B cell (primary cell): ENCODE measurements at regions of chr1 and their contacts with region 1.

Region 1: DNA sequence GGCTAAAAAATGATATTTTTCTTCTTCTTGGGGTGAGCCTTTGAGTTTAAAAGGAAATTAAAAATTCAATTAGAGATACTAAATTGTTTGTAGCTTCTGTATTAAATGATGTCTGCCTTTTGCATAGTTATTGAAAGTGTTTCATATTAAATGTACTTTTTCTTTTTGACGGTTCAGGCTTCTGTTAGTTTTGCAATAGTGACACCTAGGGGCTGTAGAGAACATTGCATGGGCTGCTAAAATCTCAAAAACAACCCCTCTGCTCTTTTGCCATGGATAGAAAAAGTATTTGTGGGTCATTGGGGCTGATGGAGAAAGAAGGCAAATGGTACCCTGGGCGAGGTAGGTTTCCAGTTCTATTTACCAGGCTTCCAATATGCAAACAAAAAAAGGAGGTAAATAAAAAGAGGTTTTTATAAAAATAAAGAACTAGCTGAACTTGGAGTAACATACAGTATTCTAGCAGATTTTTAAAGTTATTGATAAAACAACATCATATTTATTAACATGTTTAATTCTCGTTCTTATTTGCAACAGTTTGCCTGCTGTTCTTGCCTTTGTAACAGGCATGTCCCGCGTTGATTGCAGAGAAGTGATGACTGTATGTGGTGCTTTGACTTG is 115.4 kb upstream of the HOOK1 start:
- DNase-seq: peak; percentile 67
- ATAC-seq: peak; percentile 44
- H3K4me3 ChIP-seq: no peak overlapping the region
- H3K4me3 Mint-ChIP-seq: no peak overlapping the region
- H3K27ac ChIP-seq: no peak overlapping the region
- H3K27ac Mint-ChIP-seq: no peak overlapping the region
- H3K4me1 ChIP-seq: peaks cover 24 to 29% of the 10 kb centered on the region in 2 donors
- H3K4me1 Mint-ChIP-seq: peaks cover 26% of the 10 kb centered on the region
- H3K27me3 ChIP-seq: no peaks in the 10 kb centered on the region
- H3K27me3 Mint-ChIP-seq: no peaks in the 10 kb centered on the region
- CTCF ChIP-seq: peak; percentile 97

Region 2: GRCh38 chr1:58515794-58516401 is 1183.4 kb before region 1 on chr1:
- CTCF ChIA-PET with region 1: interaction called, 4 read pairs
- POLR2A ChIA-PET with region 1: no interaction called
- intact Hi-C with region 1: loop called (anchors 5 kb)
- DNase-seq: peak; percentile 76
- ATAC-seq: peak; percentile 51
- H3K4me3 ChIP-seq: no peak overlapping the region
- H3K4me3 Mint-ChIP-seq: no peak overlapping the region
- H3K27ac ChIP-seq: peak overlapping the region in 1 of 2 donors; percentile 9
- H3K27ac Mint-ChIP-seq: peak overlapping the region; percentile 46
- H3K4me1 ChIP-seq: no peaks in the 10 kb centered on the region
- H3K4me1 Mint-ChIP-seq: no peaks in the 10 kb centered on the region
- H3K27me3 ChIP-seq: no peaks in the 10 kb centered on the region
- H3K27me3 Mint-ChIP-seq: no peaks in the 10 kb centered on the region
- CTCF ChIP-seq: peak; percentile 90

Region 3: DNA sequence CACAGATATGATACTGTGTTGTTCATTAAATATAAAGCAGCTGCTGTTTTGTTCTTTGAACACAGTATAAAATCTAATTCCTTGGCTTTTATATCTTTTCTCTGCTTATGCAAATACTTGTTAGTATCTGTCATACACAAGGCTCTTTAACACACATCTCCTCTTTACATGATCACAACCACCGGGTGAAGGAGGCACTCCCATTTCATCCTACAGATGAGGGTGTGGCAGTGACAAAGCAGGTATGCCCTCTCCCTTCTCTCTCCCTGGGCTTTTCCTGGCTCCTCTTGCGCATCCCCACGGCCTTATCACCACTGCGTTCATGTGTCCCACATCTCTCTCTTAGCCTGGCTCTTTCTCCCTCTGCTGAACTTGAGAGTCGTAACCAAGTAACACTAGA is 953.7 kb before region 1 on chr1:
- CTCF ChIA-PET with region 1: interaction called, 188 read pairs
- POLR2A ChIA-PET with region 1: interaction called, 3 read pairs
- intact Hi-C with region 1: loop called (anchors 1 kb)
- DNase-seq: no peak
- ATAC-seq: no peak
- H3K4me3 ChIP-seq: no peak overlapping the region
- H3K4me3 Mint-ChIP-seq: no peak overlapping the region
- H3K27ac ChIP-seq: no peak overlapping the region
- H3K27ac Mint-ChIP-seq: no peak overlapping the region
- H3K4me1 ChIP-seq: no peaks in the 10 kb centered on the region
- H3K4me1 Mint-ChIP-seq: no peaks in the 10 kb centered on the region
- H3K27me3 ChIP-seq: peaks cover 0 to 3% (median 0%) of the 10 kb centered on the region in 4 experiments
- H3K27me3 Mint-ChIP-seq: peaks cover 23% of the 10 kb centered on the region
- CTCF ChIP-seq: no peak

Region 4: DNA sequence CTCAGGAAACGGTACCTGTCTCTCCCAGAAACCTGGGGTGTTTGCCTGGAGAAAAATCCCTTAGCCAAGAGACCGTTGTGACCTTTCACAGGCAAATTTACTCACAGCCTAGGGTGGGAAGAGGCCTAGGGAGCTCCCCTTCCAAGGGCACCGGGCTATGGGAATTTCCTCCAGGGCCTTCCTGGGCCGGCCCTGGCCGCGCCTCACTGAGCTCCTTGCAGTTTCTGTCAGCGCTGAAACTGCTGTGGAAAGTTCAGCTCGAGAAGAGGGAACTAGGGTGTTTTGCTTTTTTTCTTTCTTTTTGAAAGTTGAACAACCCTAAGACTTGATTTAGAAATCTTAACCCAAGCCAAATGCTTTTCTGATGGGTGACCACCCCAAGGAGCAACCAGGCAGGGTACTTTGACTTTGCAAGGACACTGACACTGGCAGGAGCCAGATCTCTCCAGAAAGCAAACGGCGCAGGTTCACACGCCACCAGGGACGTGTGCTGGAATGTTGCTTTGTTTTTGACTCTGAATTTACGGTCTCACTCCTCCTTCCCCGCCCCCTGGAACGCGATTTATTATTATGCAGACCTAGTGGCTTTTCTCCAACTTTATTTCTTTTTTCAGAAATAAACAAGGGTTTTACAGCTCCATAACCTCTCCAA is 685.9 kb before region 1 on chr1:
- CTCF ChIA-PET with region 1: interaction called, 3 read pairs
- POLR2A ChIA-PET with region 1: no interaction called
- intact Hi-C with region 1: loop called (anchors 5 kb)
- DNase-seq: peak; percentile 62
- ATAC-seq: peak; percentile 64
- H3K4me3 ChIP-seq: peak overlapping the region in 3 of 5 experiments; percentile 24 to 45 (median 45)
- H3K4me3 Mint-ChIP-seq: peak overlapping the region; percentile 81
- H3K27ac ChIP-seq: peak overlapping the region; percentile 65 to 82
- H3K27ac Mint-ChIP-seq: peak overlapping the region; percentile 92
- H3K4me1 ChIP-seq: peaks cover 44 to 64% of the 10 kb centered on the region in 2 donors
- H3K4me1 Mint-ChIP-seq: peaks cover 68% of the 10 kb centered on the region
- H3K27me3 ChIP-seq: no peaks in the 10 kb centered on the region
- H3K27me3 Mint-ChIP-seq: no peaks in the 10 kb centered on the region
- CTCF ChIP-seq: no peak

Region 5: DNA sequence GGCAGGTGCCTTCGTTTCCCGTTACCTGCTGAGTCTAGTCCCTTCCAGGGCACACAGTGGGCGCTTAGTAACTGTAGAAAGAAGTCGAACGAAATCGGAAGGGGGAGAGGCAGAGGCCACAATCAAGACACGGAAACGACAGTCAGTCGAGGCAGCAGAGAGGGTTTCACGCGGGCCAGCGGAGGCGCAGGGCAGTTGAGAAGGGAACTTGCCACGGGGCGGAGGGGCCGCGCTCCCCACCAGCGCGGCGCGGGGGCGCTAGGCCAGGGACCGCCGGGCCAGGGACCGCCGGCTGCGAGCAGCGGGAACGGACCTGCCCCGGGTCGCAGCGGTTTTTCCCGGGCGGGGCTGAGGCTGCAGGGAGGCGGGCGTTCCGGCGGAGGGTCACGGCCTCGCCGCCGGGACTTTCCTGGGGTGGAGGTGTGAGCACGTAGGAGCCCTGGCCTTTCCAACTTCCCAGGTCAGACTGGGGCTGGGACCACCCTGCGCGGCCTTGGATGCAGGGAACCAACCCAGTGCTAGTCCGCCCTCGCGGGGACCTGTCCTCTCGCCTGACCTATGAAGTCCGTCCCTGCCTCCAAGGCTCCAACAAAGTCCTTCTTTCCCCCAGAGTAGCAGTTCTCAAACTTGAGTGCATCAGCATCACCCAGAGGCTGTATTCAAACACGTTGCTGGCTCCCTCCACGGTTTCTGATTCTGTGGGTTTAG is 552.5 kb before region 1 on chr1:
- CTCF ChIA-PET with region 1: interaction called, 11 read pairs
- POLR2A ChIA-PET with region 1: no interaction called
- intact Hi-C with region 1: loop called (anchors 2 kb)
- DNase-seq: peak; percentile 78
- ATAC-seq: peak; percentile 85
- H3K4me3 ChIP-seq: peak overlapping the region; percentile 31 to 69 (median 58)
- H3K4me3 Mint-ChIP-seq: peak overlapping the region; percentile 94
- H3K27ac ChIP-seq: peak overlapping the region; percentile 49 to 72
- H3K27ac Mint-ChIP-seq: peak overlapping the region; percentile 88
- H3K4me1 ChIP-seq: peaks cover 16 to 28% of the 10 kb centered on the region in 2 donors
- H3K4me1 Mint-ChIP-seq: peaks cover 32% of the 10 kb centered on the region
- H3K27me3 ChIP-seq: no peaks in the 10 kb centered on the region
- H3K27me3 Mint-ChIP-seq: no peaks in the 10 kb centered on the region
- CTCF ChIP-seq: peak; percentile 45

Region 6: DNA sequence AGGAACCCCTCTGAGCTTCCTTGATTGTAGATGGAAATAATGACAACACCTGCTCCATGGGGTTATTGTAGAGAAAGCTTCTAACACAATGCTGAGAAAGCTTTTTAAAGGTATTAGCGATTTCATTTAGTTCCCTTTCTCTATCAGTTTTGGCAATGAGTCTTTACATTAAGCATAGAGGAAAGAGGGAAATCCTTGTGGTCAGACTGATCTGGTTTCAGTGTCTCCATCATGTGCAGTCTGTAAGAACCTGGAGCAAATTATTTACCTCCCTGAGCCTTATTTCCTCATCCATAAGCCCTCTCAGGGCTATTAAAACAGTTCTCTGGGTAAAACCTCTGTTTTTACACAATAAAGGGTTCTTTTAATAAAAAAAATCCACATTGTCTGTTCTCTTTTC is 314.9 kb before region 1 on chr1:
- CTCF ChIA-PET with region 1: no interaction called
- POLR2A ChIA-PET with region 1: no interaction called
- intact Hi-C with region 1: no loop called
- DNase-seq: no peak
- ATAC-seq: no peak
- H3K4me3 ChIP-seq: no peak overlapping the region
- H3K4me3 Mint-ChIP-seq: no peak overlapping the region
- H3K27ac ChIP-seq: no peak overlapping the region
- H3K27ac Mint-ChIP-seq: no peak overlapping the region
- H3K4me1 ChIP-seq: no peaks in the 10 kb centered on the region
- H3K4me1 Mint-ChIP-seq: peaks cover 1% of the 10 kb centered on the region
- H3K27me3 ChIP-seq: no peaks in the 10 kb centered on the region
- H3K27me3 Mint-ChIP-seq: no peaks in the 10 kb centered on the region
- CTCF ChIP-seq: no peak

Region 7: DNA sequence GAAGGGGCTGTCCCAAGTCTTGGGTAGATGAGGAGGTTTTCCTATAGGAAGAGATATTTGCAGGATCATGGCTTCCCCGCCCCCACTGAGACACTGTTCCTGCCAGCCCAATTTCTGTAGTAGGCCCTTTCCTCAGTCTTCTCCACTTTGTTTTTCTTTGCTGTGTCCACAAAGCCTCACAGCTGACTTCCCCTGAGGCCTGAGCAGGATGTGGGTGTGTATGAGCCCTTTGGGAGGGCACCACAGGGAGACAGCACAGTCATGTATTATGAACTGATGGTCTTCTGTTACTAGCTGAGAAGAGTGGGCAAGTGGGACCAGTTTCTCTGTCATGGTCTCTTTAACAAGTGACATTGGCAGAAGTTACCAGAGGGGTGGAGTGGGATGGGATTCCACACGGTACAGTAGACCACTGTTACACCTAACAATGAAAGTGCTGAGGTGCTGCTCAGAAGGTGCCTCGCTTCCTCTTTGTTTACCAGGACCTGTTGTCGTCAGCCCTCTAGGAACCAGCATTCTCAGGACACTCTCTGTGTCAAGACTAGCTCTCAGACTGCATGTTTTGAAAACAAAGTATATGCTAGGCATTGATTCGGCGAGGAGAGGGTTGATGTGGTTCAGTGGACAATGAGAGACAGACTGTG is 138.4 kb before region 1 on chr1:
- CTCF ChIA-PET with region 1: interaction called, 27 read pairs
- POLR2A ChIA-PET with region 1: no interaction called
- intact Hi-C with region 1: loop called (anchors 2 kb)
- DNase-seq: peak; percentile 41
- ATAC-seq: peak; percentile 89
- H3K4me3 ChIP-seq: peak overlapping the region in 1 of 5 experiments; percentile 5
- H3K4me3 Mint-ChIP-seq: peak overlapping the region; percentile 56
- H3K27ac ChIP-seq: peak overlapping the region; percentile 11 to 58
- H3K27ac Mint-ChIP-seq: peak overlapping the region; percentile 84
- H3K4me1 ChIP-seq: peaks cover 30 to 31% of the 10 kb centered on the region in 2 donors
- H3K4me1 Mint-ChIP-seq: peaks cover 42% of the 10 kb centered on the region
- H3K27me3 ChIP-seq: no peaks in the 10 kb centered on the region
- H3K27me3 Mint-ChIP-seq: no peaks in the 10 kb centered on the region
- CTCF ChIP-seq: no peak